Motor neuron (in vitro differentiated cells): ENCODE measurements at regions of chr1 and their contacts with region 1.

Region 1: GRCh38 chr1:147389532-147390524 is 147.3 kb downstream of the CHD1L start:
- ATAC-seq: peak; percentile 39 to 88 (median 70)
- H3K4me3 ChIP-seq: no peak overlapping the region
- H3K27ac ChIP-seq: no peak overlapping the region
- H3K4me1 ChIP-seq: no peaks in the 10 kb centered on the region

Region 2: GRCh38 chr1:147264158-147264768 is 125.6 kb before region 1 on chr1:
- in situ Hi-C with region 1: loop called in 1 of 9 experiments (anchors 10 kb)
- ATAC-seq: no peak
- H3K4me3 ChIP-seq: no peak overlapping the region
- H3K27ac ChIP-seq: no peak overlapping the region
- H3K4me1 ChIP-seq: no peaks in the 10 kb centered on the region

Region 3: GRCh38 chr1:147292631-147293251 is 97.1 kb before region 1 on chr1:
- in situ Hi-C with region 1: loop called in 2 of 9 experiments (anchors 25 kb)
- ATAC-seq: peak in 3 of 8 experiments; percentile 58 to 92 (median 90)
- H3K4me3 ChIP-seq: no peak overlapping the region
- H3K27ac ChIP-seq: no peak overlapping the region
- H3K4me1 ChIP-seq: no peaks in the 10 kb centered on the region